ENCODE measurements at regions of chr9 and their contacts with region 1.

Region 1: GRCh38 chr9:100700689-100701318 is 122.9 kb downstream of the CAVIN4 start:
- H3K4me3 ChIP-seq: no peak overlapping the region
- H3K27ac ChIP-seq: no peak overlapping the region
- H3K4me1 ChIP-seq: no peaks in the 10 kb centered on the region
- CTCF ChIP-seq: no peak

Region 2: GRCh38 chr9:100679834-100680233 is 21.0 kb before region 1 on chr9:
- CTCF ChIA-PET with region 1: interaction called, 16 read pairs
- POLR2A ChIA-PET with region 1: no interaction called
- H3K4me3 ChIP-seq: no peak overlapping the region
- H3K27ac ChIP-seq: no peak overlapping the region
- H3K4me1 ChIP-seq: no peaks in the 10 kb centered on the region
- CTCF ChIP-seq: no peak

Region 3: DNA sequence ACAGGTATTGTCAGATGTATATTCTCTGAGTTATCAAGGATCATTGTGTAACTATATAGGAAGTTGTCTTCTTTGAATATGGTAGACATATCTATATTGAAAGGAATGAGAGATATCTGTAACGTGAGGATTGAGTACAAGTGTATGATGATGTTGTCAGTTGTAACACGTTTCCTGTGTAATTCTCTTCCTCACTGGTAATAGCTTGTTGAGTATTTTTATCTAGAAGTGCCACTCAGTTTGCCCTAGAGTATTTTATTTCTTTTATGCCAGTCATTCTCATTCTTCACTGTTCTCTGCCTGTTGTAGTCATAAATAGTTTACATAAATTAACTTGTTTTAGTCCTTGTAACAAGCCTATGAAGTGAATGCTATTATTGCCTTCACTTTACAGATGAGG is 511.9 kb after region 1 on chr9:
- CTCF ChIA-PET with region 1: no interaction called
- POLR2A ChIA-PET with region 1: no interaction called
- H3K4me3 ChIP-seq: no peak overlapping the region
- H3K27ac ChIP-seq: no peak overlapping the region
- H3K4me1 ChIP-seq: no peaks in the 10 kb centered on the region
- CTCF ChIP-seq: no peak